Breast epithelium (tissue), 4 donors: ENCODE measurements at regions of chr12 and their contacts with region 1.

Region 1: GRCh38 chr12:9781360-9781759 is 20.7 kb upstream of the CD69 start:
- DNase-seq: no peak
- H3K4me3 ChIP-seq: no peak overlapping the region
- H3K27ac ChIP-seq: no peak overlapping the region
- H3K4me1 ChIP-seq: no peaks in the 10 kb centered on the region
- H3K27me3 ChIP-seq: no peaks in the 10 kb centered on the region
- CTCF ChIP-seq: no peak
- POLR2A ChIP-seq: no peak

Region 2: DNA sequence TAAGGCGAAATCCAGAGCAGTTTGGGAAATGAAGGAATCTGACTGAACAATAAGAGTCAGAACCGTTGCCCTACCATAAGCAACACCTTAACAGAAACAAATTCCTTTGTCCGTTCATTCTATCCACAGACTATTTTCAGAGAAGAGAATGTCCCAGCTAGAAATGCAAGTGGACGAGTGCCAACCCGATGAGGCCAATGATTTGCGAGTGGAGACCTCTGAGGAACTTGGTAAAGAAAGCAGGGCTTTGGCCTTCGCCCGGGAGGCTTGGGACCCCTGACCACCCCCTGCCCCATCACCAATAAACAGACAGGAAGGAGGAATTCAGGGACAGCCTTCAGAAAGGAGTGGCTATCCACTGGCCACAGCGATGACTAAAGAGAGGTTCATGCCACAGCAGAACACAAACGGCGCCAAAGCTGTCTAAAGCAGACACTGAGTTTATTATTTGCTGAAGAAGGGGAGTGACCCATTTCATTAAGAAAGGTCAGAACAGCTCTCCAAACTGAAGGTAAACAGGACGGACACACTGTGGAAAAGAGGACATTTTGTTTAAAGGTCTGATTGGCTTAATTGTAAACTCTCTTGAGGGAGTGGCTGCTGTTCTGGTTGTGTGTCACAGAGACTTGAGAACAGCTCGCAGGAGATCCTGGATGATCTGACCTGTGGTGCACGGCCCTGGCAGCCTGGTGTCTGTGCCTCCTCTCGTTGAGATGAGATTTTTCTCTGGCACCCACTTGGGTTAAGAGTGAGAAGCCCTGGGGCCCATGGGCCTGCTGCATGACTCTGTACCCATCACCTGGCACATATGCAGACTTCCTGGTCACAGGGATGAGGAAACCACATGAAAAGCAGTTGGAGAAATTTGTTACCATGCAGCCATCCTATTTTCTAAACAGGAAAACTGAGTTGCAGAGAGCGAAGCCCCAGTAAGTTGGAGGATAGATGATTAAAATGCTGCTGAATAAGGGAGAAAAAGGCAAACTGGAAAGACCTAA is 431.2 kb before region 1 on chr12:
- intact Hi-C with region 1: no loop called
- DNase-seq: no peak
- H3K4me3 ChIP-seq: no peak overlapping the region
- H3K27ac ChIP-seq: no peak overlapping the region
- H3K4me1 ChIP-seq: no peaks in the 10 kb centered on the region
- H3K27me3 ChIP-seq: no peaks in the 10 kb centered on the region
- CTCF ChIP-seq: no peak
- POLR2A ChIP-seq: no peak

Region 3: DNA sequence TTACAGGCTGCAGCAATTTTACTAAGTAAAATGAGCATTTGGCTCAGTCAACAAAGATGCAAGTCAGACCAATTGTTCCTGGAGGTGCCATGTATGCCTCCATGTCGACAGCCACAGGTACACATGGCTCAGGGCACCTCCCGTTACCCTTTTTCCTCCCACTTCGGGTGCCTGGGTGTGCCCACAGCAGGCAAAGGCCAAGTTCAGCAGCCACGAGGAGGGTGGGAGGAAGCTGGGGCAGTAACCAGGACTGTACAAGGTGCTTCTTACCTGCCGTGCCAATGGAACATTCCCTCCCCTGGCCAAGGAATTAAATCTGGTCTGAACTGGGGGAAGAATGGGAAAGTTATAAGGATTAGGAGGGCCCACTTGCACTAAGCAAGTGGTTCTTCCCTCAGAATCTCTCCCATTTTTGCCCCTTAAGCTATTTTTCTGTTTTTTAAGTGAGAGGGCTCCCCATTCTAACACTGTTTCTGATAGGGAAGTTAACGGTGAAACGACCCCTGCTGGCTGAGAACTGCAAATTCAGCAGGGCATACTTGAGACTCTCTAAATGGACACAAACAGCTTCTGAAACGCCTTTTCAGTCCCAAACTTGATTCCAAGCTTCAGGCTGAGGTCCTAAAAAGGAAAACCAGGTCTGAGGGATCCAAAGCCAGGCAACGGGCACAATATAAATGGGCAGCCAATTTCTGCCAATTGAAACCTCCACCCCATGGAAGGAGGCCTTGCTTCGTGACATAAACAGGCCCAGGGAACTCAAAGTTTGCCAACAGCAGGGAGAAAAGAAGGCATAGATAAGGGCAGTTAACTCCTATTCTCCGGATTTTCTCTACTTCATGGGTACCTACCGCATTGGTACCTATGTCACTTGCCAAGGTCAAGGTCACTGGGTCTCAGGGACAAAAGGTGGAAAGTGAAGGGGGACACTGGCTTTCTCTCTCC is 73.2 kb before region 1 on chr12:
- intact Hi-C with region 1: no loop called
- DNase-seq: no peak
- H3K4me3 ChIP-seq: no peak overlapping the region
- H3K27ac ChIP-seq: no peak overlapping the region
- H3K4me1 ChIP-seq: no peaks in the 10 kb centered on the region
- H3K27me3 ChIP-seq: no peaks in the 10 kb centered on the region
- CTCF ChIP-seq: peak; percentile 72 to 85 (median 78)
- POLR2A ChIP-seq: no peak

Region 4: DNA sequence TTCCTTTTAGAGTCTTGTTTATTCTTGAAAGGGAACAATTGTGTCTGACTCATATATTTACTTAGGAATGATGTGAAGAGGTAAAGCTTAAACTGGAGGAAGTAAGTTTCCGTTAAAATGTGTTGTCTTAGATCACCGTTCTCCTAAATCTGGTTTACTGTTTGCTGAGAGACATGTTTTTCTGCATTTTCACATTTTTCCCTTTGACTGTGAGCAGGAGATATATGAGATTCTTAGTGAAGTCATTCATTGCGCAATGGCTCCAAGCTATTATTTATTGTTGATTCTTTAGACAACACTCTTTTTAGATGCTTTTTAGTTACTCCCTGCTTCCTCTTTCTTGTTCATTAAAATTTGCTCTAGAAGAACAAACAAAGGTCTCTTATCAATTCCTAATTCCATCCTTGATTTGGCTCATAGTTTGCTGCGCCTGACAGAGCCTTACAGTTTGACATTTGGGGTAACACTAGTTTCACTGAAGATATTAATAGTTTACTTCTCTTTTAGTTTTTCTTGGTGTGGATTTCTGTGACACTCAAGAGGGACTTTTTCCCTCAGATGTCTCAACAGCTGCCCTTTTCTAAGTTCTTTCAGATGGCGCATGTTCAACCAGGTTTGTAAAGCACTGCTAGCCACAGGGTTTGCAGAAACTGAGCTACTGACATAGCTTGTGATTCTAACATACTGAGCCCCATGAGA is 59.8 kb before region 1 on chr12:
- intact Hi-C with region 1: loop called (anchors 2 kb)
- DNase-seq: no peak
- H3K4me3 ChIP-seq: no peak overlapping the region
- H3K27ac ChIP-seq: no peak overlapping the region
- H3K4me1 ChIP-seq: no peaks in the 10 kb centered on the region
- H3K27me3 ChIP-seq: no peaks in the 10 kb centered on the region
- CTCF ChIP-seq: no peak
- POLR2A ChIP-seq: no peak

Region 5: DNA sequence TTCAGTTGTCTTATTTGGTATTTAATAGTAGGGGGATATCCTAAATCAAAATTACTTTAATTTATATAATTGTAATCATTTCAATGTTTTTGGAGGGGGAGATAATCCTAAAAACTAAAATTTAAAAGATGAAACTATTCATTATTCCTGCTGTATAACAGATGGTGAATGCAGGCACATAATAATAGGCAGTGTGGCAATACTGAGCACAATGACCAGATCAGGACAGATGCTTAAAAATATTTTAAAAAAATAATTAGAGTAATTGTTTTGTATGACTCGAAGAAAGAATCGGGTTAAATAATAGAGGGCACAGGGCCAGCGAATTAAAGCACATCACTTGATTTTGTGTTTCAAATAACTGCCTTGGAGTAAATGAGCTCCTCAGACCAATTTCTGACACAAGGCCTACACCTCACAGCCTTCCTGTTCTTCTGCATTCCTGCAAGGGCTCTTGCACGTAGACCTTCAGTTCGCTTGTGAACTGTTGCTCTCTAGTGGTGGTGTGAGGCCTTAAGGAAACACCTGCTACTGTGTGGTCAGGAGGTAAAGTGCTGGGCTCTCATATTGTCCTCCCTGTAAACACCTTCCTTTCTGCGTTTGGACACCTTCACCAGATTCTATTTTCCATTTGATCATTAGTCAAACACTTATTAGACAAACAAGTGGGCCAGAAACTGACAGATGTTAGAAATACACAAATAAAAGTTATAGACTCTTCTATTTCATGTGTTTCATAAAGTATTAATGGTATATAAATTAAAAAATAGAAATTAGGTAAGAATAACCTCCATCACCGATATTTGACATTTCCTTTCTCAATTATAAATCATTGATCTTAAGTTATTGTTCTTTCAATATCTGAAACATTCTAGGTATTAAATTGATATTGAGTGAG is 16.6 kb after region 1 on chr12:
- intact Hi-C with region 1: no loop called
- DNase-seq: peak in 1 of 2 donors; percentile 45
- H3K4me3 ChIP-seq: no peak overlapping the region
- H3K27ac ChIP-seq: no peak overlapping the region
- H3K4me1 ChIP-seq: no peaks in the 10 kb centered on the region
- H3K27me3 ChIP-seq: no peaks in the 10 kb centered on the region
- CTCF ChIP-seq: peak in 2 of 3 donors; percentile 47 to 51
- POLR2A ChIP-seq: no peak